ENCODE measurements at regions of chr15 and their contacts with region 1.

Region 1: DNA sequence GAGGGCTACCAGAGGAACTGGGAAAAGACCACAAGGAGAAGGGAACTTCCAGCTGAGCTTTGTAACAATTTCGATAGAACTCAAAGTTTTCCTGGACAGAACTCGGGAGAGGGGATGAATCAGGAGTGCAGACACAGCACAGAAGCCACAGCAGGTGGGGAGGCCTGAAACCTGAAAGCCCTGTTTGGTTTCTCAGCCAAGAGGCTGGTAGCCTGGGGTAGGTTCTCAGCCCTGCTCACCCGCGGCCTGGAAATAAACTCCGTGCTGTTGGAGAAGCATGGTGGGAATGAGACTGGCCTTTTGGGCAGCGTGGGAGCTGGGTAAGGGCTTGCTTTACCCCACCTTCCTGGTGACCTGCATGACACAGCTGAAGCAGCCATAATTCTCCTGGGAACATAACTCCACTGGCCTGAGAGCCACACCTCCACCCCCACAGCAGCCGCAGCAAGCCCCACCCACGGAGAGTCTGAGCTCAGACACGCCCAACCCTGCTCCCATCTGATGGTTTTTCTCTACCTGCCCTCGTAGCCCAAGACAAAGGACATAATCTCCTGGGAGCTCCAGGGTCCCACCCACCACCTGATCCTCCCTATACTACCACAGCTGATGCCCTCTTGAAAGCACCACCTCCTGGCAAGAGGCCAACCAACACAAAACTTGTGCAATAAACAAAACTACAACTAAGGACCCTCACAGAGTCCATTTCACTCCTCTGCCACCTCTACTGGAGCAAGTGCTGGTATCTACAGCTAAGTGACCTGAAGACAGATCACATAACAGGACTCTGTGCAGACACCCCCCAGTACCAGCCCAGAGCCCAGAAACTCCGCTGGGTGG is 52.5 kb upstream of the CHRM5 start:
- DNase-seq: no peak

Region 2: DNA sequence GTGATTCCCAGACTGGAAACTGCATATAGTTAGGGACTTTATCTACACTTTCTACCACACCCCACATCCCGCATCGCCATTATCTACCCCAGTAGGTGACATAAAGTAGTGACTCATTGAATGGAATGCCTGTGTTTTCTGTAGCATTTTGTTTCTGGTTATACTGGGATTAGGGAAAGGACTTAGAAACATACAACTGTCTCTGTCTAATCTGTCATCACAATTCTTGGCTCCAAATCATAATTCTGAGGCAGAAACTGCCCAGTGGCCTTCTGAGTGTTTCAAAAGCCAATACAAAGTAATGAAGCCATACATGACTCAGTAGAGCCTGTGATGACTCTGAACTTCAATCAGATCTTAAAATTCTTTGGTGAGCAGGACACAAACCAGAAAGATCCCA is 63.2 kb before region 1 on chr15:
- intact Hi-C with region 1: loop called in 1 of 2 experiments (anchors 2 kb)
- DNase-seq: no peak

Measured in posterior vena cava (tissue), 2 donors.